AG04450 (cell line): ENCODE measurements at regions of chr1 and their contacts with region 1.

Region 1: GRCh38 chr1:179183857-179184256 is 45.6 kb downstream of the ABL2 start:
- DNase-seq: no peak
- H3K4me3 ChIP-seq: no peak overlapping the region
- H3K27ac ChIP-seq: no peak overlapping the region
- H3K27me3 ChIP-seq: no peaks in the 10 kb centered on the region
- CTCF ChIP-seq: no peak

Region 2: GRCh38 chr1:179194068-179194537 is 10.2 kb after region 1 on chr1:
- CTCF ChIA-PET with region 1: interaction called, 10 read pairs
- POLR2A ChIA-PET with region 1: no interaction called
- DNase-seq: no peak
- H3K4me3 ChIP-seq: no peak overlapping the region
- H3K27ac ChIP-seq: no peak overlapping the region
- H3K27me3 ChIP-seq: no peaks in the 10 kb centered on the region
- CTCF ChIP-seq: no peak

Region 3: DNA sequence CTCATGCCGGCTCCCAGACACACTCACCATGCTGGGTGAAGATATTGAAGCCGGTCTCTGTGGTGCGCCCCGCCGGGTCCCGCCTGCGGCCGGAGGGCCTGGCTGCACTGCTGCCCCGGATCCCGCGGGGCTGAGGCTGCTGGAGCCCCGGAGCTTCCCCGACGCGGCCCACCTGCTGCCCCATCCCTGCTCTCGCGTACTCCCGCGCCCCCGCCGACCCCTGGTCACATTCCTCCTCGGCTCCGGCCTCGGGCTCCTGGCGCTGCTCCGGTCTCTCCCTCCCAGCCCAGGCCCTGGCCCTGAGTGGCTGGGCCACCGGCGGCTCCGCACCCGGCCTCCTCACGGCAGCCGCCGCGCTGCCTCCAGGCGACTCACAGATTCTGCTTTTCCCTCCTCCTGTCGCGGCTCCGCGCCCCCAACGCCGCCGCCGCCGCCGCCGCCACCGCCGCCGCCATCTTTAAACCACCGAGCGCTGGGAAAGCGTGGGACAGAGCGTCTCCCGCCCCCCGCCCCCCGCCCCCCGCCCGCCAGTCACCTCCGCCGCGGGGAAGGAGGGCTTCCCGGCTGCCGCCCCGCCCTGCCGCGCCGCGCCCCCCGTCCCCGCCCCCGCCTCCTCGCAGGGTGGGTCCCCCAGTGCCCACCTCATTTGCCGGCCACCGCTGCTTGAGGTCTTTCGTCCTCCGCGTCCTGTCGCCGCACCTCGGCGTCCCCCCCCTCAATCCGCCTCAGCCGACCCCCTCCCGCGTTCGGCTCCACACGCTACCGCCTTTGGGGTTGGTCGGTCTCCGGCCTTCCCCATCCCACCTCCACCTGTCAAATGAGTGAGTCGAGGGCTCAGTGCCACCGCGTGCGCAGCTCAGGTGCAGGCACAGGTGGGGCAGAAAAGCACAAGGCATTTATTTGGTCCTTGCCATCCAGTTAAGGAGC is 45.6 kb after region 1 on chr1 and contains the start of gene ABL2:
- CTCF ChIA-PET with region 1: no interaction called
- POLR2A ChIA-PET with region 1: no interaction called
- DNase-seq: no peak
- H3K4me3 ChIP-seq: peak within 1 kb of the TSS; percentile 72
- H3K27ac ChIP-seq: peak within 1 kb of the TSS; percentile 81
- H3K27me3 ChIP-seq: no peaks in the 10 kb centered on the region
- CTCF ChIP-seq: no peak
- polyA plus RNA-seq, gene ABL2: 13.9 and 19.2 TPM in 2 replicates